AG04449 (cell line): ENCODE measurements at regions of chr17 and their contacts with region 1.

Region 1: GRCh38 chr17:75238684-75239191 is 22.7 kb downstream of the GGA3 start:
- DNase-seq: no peak
- H3K4me3 ChIP-seq: no peak overlapping the region
- CTCF ChIP-seq: peak; percentile 89

Region 2: GRCh38 chr17:75182569-75183450 is 55.9 kb before region 1 on chr17 and contains the start of gene SUMO2:
- CTCF ChIA-PET with region 1: no interaction called
- POLR2A ChIA-PET with region 1: no interaction called
- DNase-seq: peak; percentile 55
- H3K4me3 ChIP-seq: peak within 1 kb of the TSS; percentile 93
- CTCF ChIP-seq: peak; percentile 43

Region 3: DNA sequence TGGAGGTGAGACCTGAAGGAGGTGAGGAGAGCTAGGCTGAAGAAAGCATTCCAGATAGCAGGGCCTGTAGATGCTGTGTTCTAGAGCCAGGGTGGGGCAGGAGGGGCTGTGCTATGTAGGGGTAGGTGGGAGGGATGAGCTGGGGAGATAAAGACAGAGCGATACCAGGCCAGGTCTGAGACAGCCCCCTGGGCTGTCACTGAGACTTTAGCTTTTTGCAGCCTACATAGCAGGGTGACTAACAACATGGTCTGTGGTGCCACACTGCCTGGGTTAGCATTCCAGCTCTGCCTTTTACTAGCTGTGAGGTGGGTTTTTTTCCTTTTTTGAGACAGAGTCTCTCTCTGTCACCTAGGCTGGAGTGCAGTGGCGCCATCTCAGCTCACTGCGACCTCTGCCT is 18.9 kb before region 1 on chr17:
- CTCF ChIA-PET with region 1: interaction called, 15 read pairs
- POLR2A ChIA-PET with region 1: no interaction called
- DNase-seq: no peak
- H3K4me3 ChIP-seq: no peak overlapping the region
- CTCF ChIP-seq: no peak

Region 4: DNA sequence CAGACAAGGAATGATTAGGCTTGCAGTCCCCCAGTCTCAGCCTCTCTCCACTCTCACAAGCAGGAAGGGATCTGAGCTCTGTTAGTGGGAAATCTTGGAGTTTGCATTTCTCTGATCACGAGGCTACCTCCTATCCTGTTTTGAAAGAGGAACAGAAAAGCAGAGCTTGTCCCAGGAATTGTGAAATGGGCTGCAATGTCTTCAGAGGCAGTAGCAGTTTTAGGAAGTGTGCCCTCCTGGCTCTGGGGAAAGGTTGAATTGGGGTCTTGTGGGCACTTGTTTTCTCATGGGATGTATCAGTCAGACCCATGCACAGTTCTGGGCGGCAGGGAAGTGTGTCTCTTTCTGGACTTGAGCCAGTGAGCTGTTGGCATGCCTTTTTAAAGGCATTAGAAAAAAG is 10.4 kb before region 1 on chr17:
- CTCF ChIA-PET with region 1: interaction called, 47 read pairs
- POLR2A ChIA-PET with region 1: interaction called, 3 read pairs
- DNase-seq: no peak
- H3K4me3 ChIP-seq: no peak overlapping the region
- CTCF ChIP-seq: no peak

Region 5: GRCh38 chr17:75250009-75250471 is 11.3 kb after region 1 on chr17:
- CTCF ChIA-PET with region 1: interaction called, 73 read pairs
- POLR2A ChIA-PET with region 1: interaction called, 3 read pairs
- DNase-seq: no peak
- H3K4me3 ChIP-seq: no peak overlapping the region; the same call in 1 of the 2 replicates
- CTCF ChIP-seq: no peak

Region 6: DNA sequence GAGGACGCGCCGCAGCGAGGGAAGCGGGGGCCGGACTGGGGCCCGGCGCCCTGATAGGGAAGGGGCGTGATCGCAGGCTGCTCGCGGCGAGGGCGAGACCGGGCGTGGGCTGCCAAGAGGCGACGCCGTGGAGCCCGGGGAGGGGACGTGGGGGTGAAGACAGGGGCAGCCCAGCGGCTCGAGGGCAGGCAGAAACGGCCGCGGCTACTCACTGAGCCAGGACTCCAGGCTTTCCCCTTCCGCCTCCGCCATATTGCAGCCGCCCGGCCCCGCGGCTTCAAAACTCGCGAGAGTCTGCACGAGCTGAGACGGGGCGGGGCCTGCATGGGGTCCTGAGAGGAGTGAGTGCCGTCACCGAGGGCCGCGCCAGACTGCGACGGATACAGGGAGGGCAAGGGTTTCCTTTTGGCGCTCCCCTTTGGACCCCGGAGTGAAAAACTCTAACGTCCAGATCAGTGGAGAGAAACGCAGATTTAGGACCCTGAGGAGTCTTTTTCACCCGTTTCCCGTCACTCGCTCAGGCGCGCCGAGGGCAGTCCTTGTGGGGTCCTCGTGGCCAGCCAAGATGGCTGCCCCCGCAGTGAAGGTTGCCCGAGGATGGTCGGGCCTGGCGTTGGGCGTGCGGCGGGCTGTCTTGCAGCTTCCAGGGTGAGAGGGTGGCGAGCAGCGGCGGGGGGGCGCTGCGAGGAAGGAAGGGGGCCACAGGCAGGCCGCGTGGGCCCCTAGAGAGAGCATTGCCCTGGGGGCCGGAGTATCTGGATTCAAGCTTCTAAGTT is 22.8 kb after region 1 on chr17 and contains the starts of genes GGA3 and MRPS7:
- CTCF ChIA-PET with region 1: interaction called, 19 read pairs
- POLR2A ChIA-PET with region 1: no interaction called
- DNase-seq: no peak
- H3K4me3 ChIP-seq: peak within 1 kb of the TSS; percentile 93
- CTCF ChIP-seq: no peak